Breast epithelium (tissue), 4 donors: ENCODE measurements at regions of chr1 and their contacts with region 1.

Region 1: DNA sequence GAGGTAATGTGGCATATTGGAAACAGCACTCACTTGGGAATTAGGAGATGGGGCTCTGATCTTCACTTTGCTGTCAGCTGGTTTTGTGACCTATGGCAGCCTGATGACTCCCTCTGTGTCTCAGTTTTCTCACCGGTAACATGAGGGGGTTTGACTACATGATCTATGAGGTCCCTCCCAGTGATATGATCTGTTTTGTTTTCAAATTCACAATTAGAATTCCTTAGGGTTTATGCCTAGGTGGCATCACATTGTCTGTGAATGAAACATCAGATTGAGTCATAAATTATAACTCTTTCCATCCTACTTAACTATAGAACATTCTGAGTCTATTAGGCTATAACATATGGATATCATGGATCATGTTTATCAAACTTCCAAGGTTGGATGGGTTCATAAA is 386.6 kb downstream of the PTBP2 start:
- DNase-seq: no peak
- H3K4me3 ChIP-seq: no peak overlapping the region
- H3K27ac ChIP-seq: no peak overlapping the region
- H3K4me1 ChIP-seq: no peaks in the 10 kb centered on the region
- H3K27me3 ChIP-seq: no peaks in the 10 kb centered on the region
- CTCF ChIP-seq: no peak
- POLR2A ChIP-seq: no peak

Region 2: GRCh38 chr1:96987186-96987703 is 120.9 kb before region 1 on chr1:
- intact Hi-C with region 1: no loop called
- DNase-seq: no peak
- H3K4me3 ChIP-seq: no peak overlapping the region
- H3K27ac ChIP-seq: no peak overlapping the region
- H3K4me1 ChIP-seq: no peaks in the 10 kb centered on the region
- H3K27me3 ChIP-seq: no peaks in the 10 kb centered on the region
- CTCF ChIP-seq: no peak
- POLR2A ChIP-seq: no peak

Region 3: GRCh38 chr1:98496246-98496995 is 1388.2 kb after region 1 on chr1:
- intact Hi-C with region 1: loop called (anchors 5 kb)
- DNase-seq: no peak
- H3K4me3 ChIP-seq: no peak overlapping the region
- H3K27ac ChIP-seq: no peak overlapping the region
- H3K4me1 ChIP-seq: no peaks in the 10 kb centered on the region
- H3K27me3 ChIP-seq: no peaks in the 10 kb centered on the region
- CTCF ChIP-seq: no peak
- POLR2A ChIP-seq: no peak